Activated T-helper 1 cell treated with anti-CD3 and anti-CD28 coated beads, Interleukin-12 subunit alpha, Interleukin-12 subunit beta, Interleukin-2, Interleukin-4 antibody, amounts not matched to agents 30 ng/mL and 10 ng/mL and 1 ng/mL, durations not matched to agents 14 hours and 24 hours and 36 hours (primary cell): ENCODE measurements at regions of chr11 and their contacts with region 1.

Region 1: GRCh38 chr11:14373931-14374646 is 15.1 kb upstream of the RRAS2 start:
- DNase-seq: no peak
- H3K4me3 Mint-ChIP-seq: no peak overlapping the region
- H3K27ac Mint-ChIP-seq: peak overlapping the region; percentile 54
- H3K4me1 Mint-ChIP-seq: peaks cover 60% of the 10 kb centered on the region
- H3K27me3 Mint-ChIP-seq: peaks cover 6% of the 10 kb centered on the region

Region 2: DNA sequence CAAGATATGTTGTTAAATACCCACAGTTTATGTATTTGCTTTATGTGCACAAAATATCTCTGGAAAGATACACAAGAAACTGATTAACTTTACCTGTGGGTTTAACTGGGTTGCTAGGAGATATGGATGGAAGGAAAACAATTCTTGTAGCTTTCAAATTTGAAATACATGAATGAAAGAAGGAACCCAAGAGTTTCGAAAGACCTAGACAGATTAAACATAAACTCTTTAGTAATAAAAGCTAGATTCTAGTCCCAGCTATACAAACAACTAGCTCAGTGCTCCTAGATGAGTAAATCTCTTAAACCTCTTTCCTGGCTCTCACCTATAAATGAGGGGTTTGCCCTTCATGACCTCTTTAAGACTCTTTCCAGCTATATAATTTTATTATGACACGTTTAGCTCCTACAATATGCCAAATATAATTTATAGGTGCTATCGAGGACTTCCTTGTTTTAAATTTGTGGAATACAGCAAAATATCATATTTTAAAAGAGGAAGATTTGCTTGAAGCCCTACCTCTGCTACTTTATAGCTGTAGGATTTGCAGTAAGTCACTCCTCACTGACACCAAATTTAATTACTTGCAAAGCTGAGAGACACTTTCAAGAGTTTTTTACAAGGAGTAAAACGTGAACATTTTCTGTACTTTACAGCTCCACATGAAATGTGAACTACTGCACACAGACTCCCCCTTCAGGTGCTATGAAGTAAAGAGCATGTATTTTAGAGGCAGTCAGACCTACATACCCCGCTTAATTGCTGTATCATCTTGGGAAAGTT is 65.8 kb before region 1 on chr11:
- intact Hi-C with region 1: loop called (anchors 2 kb)
- DNase-seq: no peak
- H3K4me3 Mint-ChIP-seq: no peak overlapping the region
- H3K27ac Mint-ChIP-seq: no peak overlapping the region
- H3K4me1 Mint-ChIP-seq: peaks cover 26% of the 10 kb centered on the region
- H3K27me3 Mint-ChIP-seq: no peaks in the 10 kb centered on the region

Region 3: DNA sequence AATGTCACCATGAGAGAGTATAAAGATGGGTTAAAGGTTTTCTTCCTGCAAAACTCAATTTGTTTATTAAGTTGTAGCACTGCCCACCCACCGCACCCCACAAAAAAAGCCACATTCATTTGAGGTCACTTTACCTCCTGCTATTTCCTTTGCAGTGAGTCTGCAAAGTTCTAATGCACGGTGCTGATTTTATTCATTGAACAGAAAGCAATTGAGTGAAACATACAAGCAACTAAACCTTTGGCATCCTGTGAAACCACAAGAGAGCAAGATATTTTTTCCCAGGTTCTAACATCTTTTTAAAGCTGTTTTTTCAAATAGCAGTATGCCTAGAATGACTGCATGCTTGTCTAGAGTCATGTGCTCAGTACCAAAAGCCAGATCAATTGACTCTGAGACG is 54.1 kb before region 1 on chr11:
- intact Hi-C with region 1: loop called (anchors 5 kb)
- DNase-seq: peak; percentile 34
- H3K4me3 Mint-ChIP-seq: peak overlapping the region; percentile 50
- H3K27ac Mint-ChIP-seq: peak overlapping the region; percentile 44
- H3K4me1 Mint-ChIP-seq: peaks cover 83% of the 10 kb centered on the region
- H3K27me3 Mint-ChIP-seq: no peaks in the 10 kb centered on the region

Region 4: DNA sequence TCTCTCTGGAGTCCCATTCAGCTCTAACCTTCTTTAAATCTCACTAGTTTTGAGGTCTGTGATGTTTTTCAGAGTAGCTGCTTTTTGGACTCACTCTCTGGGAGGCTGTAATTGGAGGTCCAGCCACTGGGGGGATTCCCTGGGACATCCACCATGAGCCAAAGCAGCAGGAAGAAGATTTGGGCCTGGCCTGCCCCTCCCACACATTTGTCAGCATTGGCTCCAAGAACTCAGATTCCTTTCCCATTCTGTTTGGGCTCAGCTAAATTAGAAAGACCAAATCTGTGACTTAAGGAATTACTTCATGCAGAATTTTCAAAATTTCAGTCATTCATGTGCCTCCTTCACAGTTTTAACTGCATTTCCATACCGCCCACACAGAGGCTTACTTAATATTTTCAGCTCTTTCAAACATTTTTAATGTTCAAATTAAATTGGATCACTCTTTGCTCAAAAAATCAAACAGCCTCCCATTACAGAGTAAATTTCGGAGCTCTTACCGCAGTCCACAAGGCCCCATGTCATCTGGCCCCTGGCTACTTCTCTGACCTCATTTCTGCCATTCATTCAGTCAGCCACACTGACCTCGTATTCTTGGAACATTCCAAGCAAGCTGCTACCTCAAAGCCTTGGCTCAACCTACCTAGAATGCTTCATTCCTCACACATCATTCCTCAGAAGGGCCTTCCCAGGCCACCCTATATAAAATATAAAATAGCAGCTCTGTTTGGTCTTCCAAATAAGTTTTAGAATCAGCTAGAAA is 39.4 kb after region 1 on chr11:
- intact Hi-C with region 1: loop called (anchors 1 kb)
- DNase-seq: no peak
- H3K4me3 Mint-ChIP-seq: no peak overlapping the region
- H3K27ac Mint-ChIP-seq: no peak overlapping the region
- H3K4me1 Mint-ChIP-seq: peaks cover 79% of the 10 kb centered on the region
- H3K27me3 Mint-ChIP-seq: no peaks in the 10 kb centered on the region